Lower leg skin (tissue), 4 donors: ENCODE measurements at regions of chr1 and their contacts with region 1.

Region 1: DNA sequence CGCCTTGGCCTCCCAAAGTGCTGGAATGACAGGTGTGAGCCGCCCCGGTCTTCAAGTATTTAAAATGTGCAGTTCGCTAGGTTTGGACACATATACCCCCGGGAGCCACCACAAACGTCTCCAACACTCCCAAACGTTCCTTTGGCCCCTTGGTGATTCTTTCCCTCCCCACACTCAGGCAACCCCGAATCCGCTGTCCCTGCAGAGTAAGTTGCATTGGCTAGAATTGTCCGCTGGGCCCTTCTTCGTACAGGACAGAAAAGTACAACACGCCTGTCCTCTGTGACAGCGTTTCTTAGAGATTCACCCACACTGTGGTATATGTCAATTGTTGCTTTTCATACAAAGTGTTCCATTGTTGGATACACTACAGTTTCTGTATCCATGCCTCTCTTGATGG is 3.2 kb upstream of the PERM1 start:
- DNase-seq: no peak
- H3K4me3 ChIP-seq: no peak overlapping the region
- CTCF ChIP-seq: no peak
- POLR2A ChIP-seq: no peak

Region 2: DNA sequence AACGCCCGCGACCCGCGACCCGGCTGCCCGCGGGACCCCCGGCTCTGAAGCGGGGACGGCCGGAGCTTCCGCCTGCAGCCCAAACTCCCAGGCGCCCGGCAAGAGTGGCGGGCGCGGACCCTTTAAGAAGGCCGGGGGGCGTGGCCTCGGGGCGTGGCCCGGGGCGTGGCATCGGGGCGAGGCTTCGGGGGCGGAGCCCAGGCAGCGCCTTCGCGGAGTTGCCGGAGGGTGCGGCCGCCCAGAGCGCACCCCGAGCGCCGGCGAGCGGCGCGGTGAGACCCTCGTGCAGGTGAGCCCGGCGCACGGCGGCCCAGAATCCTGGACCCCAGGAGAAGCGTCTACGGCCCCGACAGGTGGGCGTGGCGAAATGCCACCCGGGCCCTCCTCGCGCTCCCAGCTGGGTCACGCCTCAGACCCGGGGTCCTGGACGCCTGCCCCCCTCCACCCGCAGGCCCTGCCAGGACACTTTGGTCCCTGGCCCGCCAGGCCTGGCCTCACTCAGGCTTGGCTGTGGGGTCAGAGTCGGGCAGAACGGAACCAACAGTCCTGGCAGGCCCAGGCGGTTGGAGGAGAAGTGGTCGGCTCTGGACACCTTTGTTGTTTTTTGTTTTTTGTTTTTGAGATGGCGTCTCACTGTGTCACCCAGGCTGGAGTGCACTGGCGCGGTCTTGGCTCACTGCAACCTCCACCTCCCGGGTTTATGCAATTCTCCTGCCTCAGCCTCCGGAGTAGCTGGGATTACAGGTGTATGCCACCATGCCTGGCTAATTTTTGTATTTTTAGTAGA is 74.6 kb after region 1 on chr1:
- intact Hi-C with region 1: loop called (anchors 5 kb)
- DNase-seq: peak; percentile 80 to 96
- H3K4me3 ChIP-seq: peak overlapping the region; percentile 10
- CTCF ChIP-seq: no peak
- POLR2A ChIP-seq: no peak